ENCODE measurements at regions of chr2 and their contacts with region 1.

Region 1: DNA sequence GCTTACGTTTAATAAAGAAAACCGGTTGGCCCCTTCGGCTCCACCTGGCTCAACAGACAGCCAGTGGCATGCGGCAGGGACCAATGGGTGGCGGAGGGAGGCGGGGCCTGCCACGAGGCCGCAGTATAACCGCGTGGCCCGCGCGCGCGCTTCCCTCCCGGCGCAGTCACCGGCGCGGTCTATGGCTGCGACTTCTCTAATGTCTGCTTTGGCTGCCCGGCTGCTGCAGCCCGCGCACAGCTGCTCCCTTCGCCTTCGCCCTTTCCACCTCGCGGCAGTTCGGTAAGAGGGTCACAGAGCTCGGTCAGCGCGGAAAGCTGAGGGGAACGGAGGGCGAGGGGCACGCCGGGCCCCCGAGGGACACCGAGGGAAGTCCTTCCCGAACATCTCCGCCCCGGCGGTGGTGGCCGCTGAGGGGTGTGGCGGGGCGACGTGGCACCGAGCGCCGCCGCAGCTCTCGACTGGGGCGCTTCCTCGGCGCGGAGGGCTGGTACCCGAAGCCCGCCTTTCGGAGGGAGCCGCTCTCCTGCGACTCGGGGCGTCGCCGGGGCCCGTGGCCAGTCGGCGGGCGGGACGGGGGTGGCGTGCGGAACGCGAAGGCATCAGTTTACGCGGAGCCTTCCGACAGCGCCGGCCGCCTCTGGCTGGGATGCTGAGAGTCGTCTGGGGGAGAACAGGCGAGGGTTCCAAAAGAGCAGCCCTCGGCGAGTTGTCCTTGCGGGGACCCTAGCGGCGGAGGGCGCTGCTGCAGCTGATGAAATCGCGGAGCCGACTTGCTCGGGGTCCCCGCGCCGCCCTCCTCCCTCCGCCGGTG is at the start of gene MTHFD2:
- DNase-seq: peak; percentile 93
- H3K4me3 Mint-ChIP-seq: peak within 1 kb of the TSS; percentile 100
- H3K27ac Mint-ChIP-seq: peak within 1 kb of the TSS; percentile 100
- H3K4me1 Mint-ChIP-seq: peaks cover 38% of the 10 kb centered on the region
- H3K27me3 Mint-ChIP-seq: no peaks in the 10 kb centered on the region
- total RNA-seq, gene MTHFD2: 371 and 381 TPM in 2 replicates

Region 2: GRCh38 chr2:74178201-74179062 is 20.2 kb before region 1 on chr2 and contains the start of gene MOB1A:
- intact Hi-C with region 1: loop called (anchors 1 kb)
- DNase-seq: peak; percentile 97
- H3K4me3 Mint-ChIP-seq: peak within 1 kb of the TSS; percentile 85
- H3K27ac Mint-ChIP-seq: peak within 1 kb of the TSS; percentile 81
- H3K4me1 Mint-ChIP-seq: peaks cover 40% of the 10 kb centered on the region
- H3K27me3 Mint-ChIP-seq: no peaks in the 10 kb centered on the region
- total RNA-seq, gene MOB1A: 208 and 215 TPM in 2 replicates

Region 3: DNA sequence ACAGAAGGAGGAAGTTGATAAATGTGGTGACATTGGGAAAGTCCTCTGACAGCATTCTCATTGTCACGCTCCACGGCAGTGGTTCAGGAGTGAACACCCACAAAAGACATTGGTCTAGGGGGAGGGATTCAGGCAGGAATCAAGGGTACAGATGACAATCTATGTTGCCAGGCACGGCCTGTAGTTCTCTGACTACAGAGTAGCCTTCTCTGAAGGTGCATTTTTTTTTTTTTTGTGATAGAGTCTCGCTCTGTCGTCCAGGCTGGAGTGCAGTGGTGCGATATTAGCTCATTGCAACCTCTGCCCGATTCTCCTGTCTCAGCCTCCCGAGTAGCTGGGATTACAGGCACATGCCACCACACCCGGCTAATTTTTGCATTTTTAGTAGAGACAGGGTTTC is 12.6 kb before region 1 on chr2:
- intact Hi-C with region 1: loop called (anchors 1 kb)
- DNase-seq: peak; percentile 46
- H3K4me3 Mint-ChIP-seq: no peak overlapping the region
- H3K27ac Mint-ChIP-seq: peak overlapping the region; percentile 75
- H3K4me1 Mint-ChIP-seq: peaks cover 35% of the 10 kb centered on the region
- H3K27me3 Mint-ChIP-seq: peaks cover 2% of the 10 kb centered on the region